SK-N-SH (cell line): ENCODE measurements at regions of chr1 and their contacts with region 1.

Region 1: GRCh38 chr1:175129997-175130648 is 62.5 kb downstream of the KIAA0040 start:
- DNase-seq: peak; percentile 44
- H3K4me3 ChIP-seq: no peak overlapping the region
- H3K27ac ChIP-seq: peak overlapping the region in 1 of 2 experiments; percentile 60; a peak in 2 of 4 replicates
- H3K4me1 ChIP-seq: peaks cover 0 to 10% of the 10 kb centered on the region in 2 experiments; a peak in 1 of 4 replicates
- H3K27me3 ChIP-seq: no peaks in the 10 kb centered on the region
- CTCF ChIP-seq: no peak
- EP300 ChIP-seq: peak in 1 of 2 experiments; percentile 34; a peak in 1 of 4 replicates
- RAD21 ChIP-seq: no peak

Region 2: GRCh38 chr1:174968750-174969244 is 161.3 kb before region 1 on chr1:
- CTCF ChIA-PET with region 1: no interaction called
- POLR2A ChIA-PET with region 1: no interaction called
- DNase-seq: no peak
- H3K4me3 ChIP-seq: no peak overlapping the region
- H3K27ac ChIP-seq: no peak overlapping the region
- H3K4me1 ChIP-seq: peaks cover 0 to 2% of the 10 kb centered on the region in 2 experiments; a peak in 2 of 4 replicates
- H3K27me3 ChIP-seq: no peaks in the 10 kb centered on the region
- CTCF ChIP-seq: no peak
- EP300 ChIP-seq: no peak
- RAD21 ChIP-seq: no peak

Region 3: GRCh38 chr1:175035865-175036264 is 94.3 kb before region 1 on chr1:
- CTCF ChIA-PET with region 1: interaction called, 158 read pairs
- POLR2A ChIA-PET with region 1: no interaction called
- DNase-seq: no peak
- H3K4me3 ChIP-seq: no peak overlapping the region
- H3K27ac ChIP-seq: no peak overlapping the region
- H3K4me1 ChIP-seq: no peaks in the 10 kb centered on the region
- H3K27me3 ChIP-seq: no peaks in the 10 kb centered on the region
- CTCF ChIP-seq: no peak
- EP300 ChIP-seq: no peak
- RAD21 ChIP-seq: no peak

Region 4: GRCh38 chr1:175206687-175207086 is 76.6 kb after region 1 on chr1:
- CTCF ChIA-PET with region 1: no interaction called
- POLR2A ChIA-PET with region 1: no interaction called
- DNase-seq: no peak
- H3K4me3 ChIP-seq: no peak overlapping the region
- H3K27ac ChIP-seq: no peak overlapping the region
- H3K4me1 ChIP-seq: no peaks in the 10 kb centered on the region
- H3K27me3 ChIP-seq: no peaks in the 10 kb centered on the region
- CTCF ChIP-seq: no peak
- EP300 ChIP-seq: no peak
- RAD21 ChIP-seq: no peak

Region 5: GRCh38 chr1:175277783-175278736 is 147.9 kb after region 1 on chr1:
- CTCF ChIA-PET with region 1: no interaction called
- POLR2A ChIA-PET with region 1: no interaction called
- DNase-seq: no peak
- H3K4me3 ChIP-seq: no peak overlapping the region
- H3K27ac ChIP-seq: no peak overlapping the region
- H3K4me1 ChIP-seq: no peaks in the 10 kb centered on the region
- H3K27me3 ChIP-seq: no peaks in the 10 kb centered on the region
- CTCF ChIP-seq: no peak
- EP300 ChIP-seq: no peak
- RAD21 ChIP-seq: no peak